Astrocyte of the cerebellum (primary cell): ENCODE measurements at regions of chr5 and their contacts with region 1.

Region 1: GRCh38 chr5:67381236-67381880 is 184.8 kb upstream of the CD180 start:
- DNase-seq: no peak
- H3K4me3 ChIP-seq: no peak overlapping the region
- CTCF ChIP-seq: no peak

Region 2: DNA sequence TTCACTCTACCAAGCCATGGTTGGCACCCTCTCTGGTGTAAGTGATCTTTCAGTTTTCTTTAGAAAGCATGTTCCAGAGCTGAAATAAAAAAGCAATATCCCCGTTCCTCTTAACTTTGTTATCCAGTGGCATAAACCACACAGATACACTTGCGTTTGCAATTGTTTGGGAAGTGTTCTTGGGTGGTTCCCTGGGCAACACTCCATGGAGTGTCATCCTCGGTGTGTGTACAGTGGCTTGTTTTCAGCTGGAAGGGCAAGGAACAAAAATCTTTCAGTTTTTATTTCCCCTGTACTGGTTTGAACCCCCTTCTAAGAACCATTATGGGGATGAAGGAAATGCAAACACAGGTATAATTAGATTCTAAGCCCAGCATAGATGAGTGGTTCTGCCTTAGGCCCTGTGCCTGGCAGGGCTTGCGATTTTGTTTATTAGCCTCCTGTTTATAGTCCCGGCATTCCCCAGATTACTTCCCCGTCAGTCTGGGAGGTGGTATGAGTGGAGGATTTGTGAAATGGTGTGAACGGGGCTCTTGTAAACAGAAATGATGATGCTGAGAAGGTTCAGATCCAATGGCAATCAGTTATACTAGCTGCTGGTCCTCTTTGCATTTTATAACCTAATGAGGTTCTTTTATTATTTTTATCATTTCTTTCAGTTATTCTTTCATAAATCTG is 108.8 kb before region 1 on chr5:
- in situ Hi-C with region 1: no loop called
- DNase-seq: no peak
- H3K4me3 ChIP-seq: no peak overlapping the region
- CTCF ChIP-seq: no peak

Region 3: DNA sequence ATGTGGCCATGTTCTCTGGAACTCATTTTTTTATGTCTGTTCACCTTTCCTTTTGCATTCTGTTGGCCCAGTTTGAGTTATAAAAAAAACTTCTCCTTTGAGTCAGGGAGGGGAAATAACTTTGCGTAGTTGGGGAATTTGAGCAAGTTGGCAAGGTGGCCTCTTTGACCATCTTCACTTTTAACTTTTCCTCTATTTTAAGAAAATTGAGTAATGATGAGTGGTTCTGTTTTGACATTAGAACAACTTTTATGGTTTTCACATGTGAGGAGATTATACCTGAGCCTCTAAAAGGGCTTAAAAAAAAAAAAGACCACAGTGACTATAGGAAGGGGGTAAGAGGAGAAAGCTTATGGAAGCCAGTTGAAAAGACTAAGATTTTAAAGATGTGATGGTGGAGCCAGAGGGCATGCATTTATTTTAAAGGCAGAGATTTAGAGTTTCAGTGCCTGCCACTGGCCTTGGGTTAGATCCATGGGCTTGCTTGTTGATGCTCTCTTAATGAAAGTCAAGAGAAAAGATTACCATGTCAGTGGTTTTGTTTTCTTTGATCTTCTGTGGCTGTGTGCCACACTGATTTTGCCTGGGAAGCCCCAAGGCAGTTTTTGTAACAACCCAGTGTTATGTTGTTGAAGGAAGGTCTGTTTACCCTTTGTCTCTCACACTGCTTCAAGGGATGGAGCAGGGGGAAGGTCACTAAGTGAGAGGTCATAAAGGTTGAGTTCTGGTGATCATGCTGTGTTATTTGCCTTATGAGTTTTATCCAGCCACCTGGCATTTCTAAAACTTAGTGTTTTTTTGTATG is 35.0 kb after region 1 on chr5:
- in situ Hi-C with region 1: loop called (anchors 5 kb)
- DNase-seq: no peak
- H3K4me3 ChIP-seq: no peak overlapping the region
- CTCF ChIP-seq: no peak